GM12878 (cell line): ENCODE measurements at regions of chr15 and their contacts with region 1.

Region 1: DNA sequence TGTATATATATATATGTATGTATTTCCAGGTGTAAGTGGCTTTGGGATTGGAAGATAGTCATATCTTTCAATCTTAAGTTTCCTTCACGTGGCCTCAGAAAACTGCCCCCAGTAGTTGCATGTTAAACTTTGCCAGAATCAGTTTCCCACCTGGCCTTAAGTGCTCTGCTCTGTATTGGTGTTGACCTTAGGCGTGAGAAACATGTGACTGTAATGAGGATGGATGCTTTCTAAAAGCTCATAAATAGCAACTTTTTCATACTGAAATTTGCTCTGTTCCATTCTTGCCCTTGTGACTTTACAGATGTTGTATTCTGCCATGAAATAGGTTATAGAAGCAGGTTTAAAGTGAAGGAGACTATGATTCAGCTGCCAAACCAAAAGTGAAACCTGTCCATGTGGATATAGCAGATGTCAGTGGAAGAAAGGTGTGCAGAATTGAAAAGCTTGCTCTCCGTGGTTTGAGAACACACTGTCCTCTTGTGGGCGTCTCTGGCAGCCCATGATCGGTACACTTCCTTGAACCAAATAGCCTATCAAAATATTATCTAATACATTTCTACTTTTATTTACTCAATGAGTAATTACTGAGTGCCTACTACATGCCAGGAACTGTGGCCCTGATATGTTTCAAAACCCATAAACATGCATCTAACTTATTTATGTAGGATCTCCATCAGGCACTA is 15.8 kb downstream of the SCG5 start:
- DNase-seq: no peak
- ATAC-seq: peak; percentile 41; the same call in 2 of the 3 replicates
- H3K4me3 ChIP-seq: no peak overlapping the region
- H3K27ac ChIP-seq: no peak overlapping the region
- H3K4me1 ChIP-seq: no peaks in the 10 kb centered on the region
- H3K27me3 ChIP-seq: no peaks in the 10 kb centered on the region
- CTCF ChIP-seq: peak in 2 of 3 experiments; percentile 18 to 20; a peak in 2 of 6 replicates
- EP300 ChIP-seq: no peak
- POLR2A ChIP-seq: no peak
- RAD21 ChIP-seq: 0 out of 2 replicates have a peak, but pooled peaks have one; percentile 18

Region 2: GRCh38 chr15:32683906-32684584 is 26.7 kb after region 1 on chr15:
- CTCF ChIA-PET with region 1: interaction called, 14 read pairs
- POLR2A ChIA-PET with region 1: no interaction called
- RAD21 ChIA-PET with region 1: no interaction called
- SMC1A ChIA-PET with region 1: no interaction called
- in situ Hi-C with region 1: no loop called
- intact Hi-C with region 1: no loop called
- DNase-seq: no peak
- ATAC-seq: no peak
- H3K4me3 ChIP-seq: no peak overlapping the region
- H3K27ac ChIP-seq: no peak overlapping the region
- H3K4me1 ChIP-seq: peaks cover 3% of the 10 kb centered on the region; the same call in 1 of the 2 replicates
- H3K27me3 ChIP-seq: no peaks in the 10 kb centered on the region
- CTCF ChIP-seq: no peak
- EP300 ChIP-seq: no peak
- POLR2A ChIP-seq: no peak
- RAD21 ChIP-seq: no peak

Region 3: DNA sequence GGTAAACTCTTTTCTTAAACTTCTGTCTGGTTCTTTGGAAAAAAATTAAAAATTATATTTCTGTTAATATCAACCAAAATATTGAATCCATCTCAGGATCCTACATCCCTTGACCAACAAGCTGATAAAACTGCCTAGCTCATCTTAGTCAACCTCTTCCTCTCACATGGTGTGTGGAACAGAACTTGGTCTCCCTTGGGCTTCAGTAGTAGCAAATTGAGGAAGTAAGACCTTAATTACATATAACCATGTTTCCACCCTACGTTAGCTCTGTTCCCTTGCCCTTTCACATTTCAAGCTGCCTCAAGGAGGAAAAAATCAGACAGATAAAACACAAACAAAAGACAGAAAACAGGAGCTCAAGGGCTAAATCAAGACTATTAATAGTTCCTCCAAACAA is 176.8 kb after region 1 on chr15:
- CTCF ChIA-PET with region 1: interaction called, 8 read pairs
- POLR2A ChIA-PET with region 1: no interaction called
- RAD21 ChIA-PET with region 1: no interaction called
- SMC1A ChIA-PET with region 1: no interaction called
- in situ Hi-C with region 1: no loop called
- intact Hi-C with region 1: loop called (anchors 5 kb)
- DNase-seq: peak; percentile 39
- ATAC-seq: peak; percentile 94
- H3K4me3 ChIP-seq: no peak overlapping the region
- H3K27ac ChIP-seq: no peak overlapping the region
- H3K4me1 ChIP-seq: peaks cover 6% of the 10 kb centered on the region; the same call in 1 of the 2 replicates
- H3K27me3 ChIP-seq: peaks cover 1 to 2% of the 10 kb centered on the region in 2 experiments; a peak in 1 of 4 replicates
- CTCF ChIP-seq: no peak
- EP300 ChIP-seq: no peak
- POLR2A ChIP-seq: no peak
- RAD21 ChIP-seq: no peak

Region 4: DNA sequence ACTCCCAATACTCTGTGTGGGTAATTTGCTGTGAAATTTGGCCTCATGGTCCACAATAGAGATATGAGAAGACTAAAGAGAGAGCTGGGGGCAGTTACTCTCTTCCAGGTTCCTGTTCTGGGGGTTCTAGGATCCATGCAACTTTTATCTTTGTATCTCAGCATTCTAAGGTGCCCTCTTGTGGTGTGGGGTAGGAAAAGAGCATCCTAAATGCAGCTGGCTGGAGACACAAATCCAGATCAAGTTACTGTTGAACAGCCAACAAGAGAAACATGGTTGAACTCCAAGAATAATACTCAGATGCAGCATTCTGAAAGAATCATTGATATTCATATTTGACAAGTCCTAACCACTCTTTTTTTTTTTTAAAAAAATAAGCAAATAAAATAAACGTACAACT is 298.7 kb after region 1 on chr15:
- CTCF ChIA-PET with region 1: interaction called, 34 read pairs
- POLR2A ChIA-PET with region 1: no interaction called
- RAD21 ChIA-PET with region 1: interaction called, 3 read pairs
- SMC1A ChIA-PET with region 1: interaction called, 7 read pairs
- in situ Hi-C with region 1: loop called (anchors 10 kb)
- intact Hi-C with region 1: loop called (anchors 1 kb)
- DNase-seq: no peak
- ATAC-seq: peak; percentile 62; the same call in 2 of the 3 replicates
- H3K4me3 ChIP-seq: no peak overlapping the region
- H3K27ac ChIP-seq: no peak overlapping the region
- H3K4me1 ChIP-seq: no peaks in the 10 kb centered on the region
- H3K27me3 ChIP-seq: no peaks in the 10 kb centered on the region
- CTCF ChIP-seq: peak; percentile 49 to 62 (median 58); a peak in 5 of 6 replicates
- EP300 ChIP-seq: no peak
- POLR2A ChIP-seq: no peak
- RAD21 ChIP-seq: peak; percentile 65

Region 5: GRCh38 chr15:32994810-32995424 is 337.6 kb after region 1 on chr15:
- CTCF ChIA-PET with region 1: interaction called, 91 read pairs
- POLR2A ChIA-PET with region 1: no interaction called
- RAD21 ChIA-PET with region 1: interaction called, 31 read pairs
- SMC1A ChIA-PET with region 1: interaction called, 18 read pairs
- in situ Hi-C with region 1: loop called (anchors 5 kb)
- intact Hi-C with region 1: loop called (anchors 1 kb)
- DNase-seq: no peak
- ATAC-seq: peak; percentile 57; the same call in 2 of the 3 replicates
- H3K4me3 ChIP-seq: no peak overlapping the region
- H3K27ac ChIP-seq: no peak overlapping the region
- H3K4me1 ChIP-seq: no peaks in the 10 kb centered on the region
- H3K27me3 ChIP-seq: peaks cover 0 to 3% of the 10 kb centered on the region in 2 experiments; a peak in 1 of 4 replicates
- CTCF ChIP-seq: peak; percentile 32 to 64 (median 47); a peak in 4 of 6 replicates
- EP300 ChIP-seq: no peak
- POLR2A ChIP-seq: no peak
- RAD21 ChIP-seq: peak; percentile 60